Posterior vena cava (tissue), 2 donors: ENCODE measurements at regions of chr9 and their contacts with region 1.

Region 1: GRCh38 chr9:104927912-104928740 is at the start of gene ABCA1:
- DNase-seq: peak; percentile 97
- total RNA-seq, gene ABCA1: 23.5 to 32.9 TPM

Region 2: GRCh38 chr9:104863180-104863883 is 64.8 kb before region 1 on chr9:
- intact Hi-C with region 1: loop called (anchors 5 to 10 kb)
- DNase-seq: peak; percentile 64

Region 3: GRCh38 chr9:104868687-104869404 is 59.3 kb before region 1 on chr9:
- intact Hi-C with region 1: loop called (anchors 5 to 10 kb)
- DNase-seq: peak; percentile 92

Region 4: GRCh38 chr9:104879555-104880309 is 48.4 kb before region 1 on chr9:
- intact Hi-C with region 1: no loop called
- DNase-seq: peak; percentile 50

Region 5: GRCh38 chr9:105064315-105065097 is 136.4 kb after region 1 on chr9:
- intact Hi-C with region 1: loop called in 1 of 2 experiments (anchors 5 kb)
- DNase-seq: peak; percentile 96

Region 6: DNA sequence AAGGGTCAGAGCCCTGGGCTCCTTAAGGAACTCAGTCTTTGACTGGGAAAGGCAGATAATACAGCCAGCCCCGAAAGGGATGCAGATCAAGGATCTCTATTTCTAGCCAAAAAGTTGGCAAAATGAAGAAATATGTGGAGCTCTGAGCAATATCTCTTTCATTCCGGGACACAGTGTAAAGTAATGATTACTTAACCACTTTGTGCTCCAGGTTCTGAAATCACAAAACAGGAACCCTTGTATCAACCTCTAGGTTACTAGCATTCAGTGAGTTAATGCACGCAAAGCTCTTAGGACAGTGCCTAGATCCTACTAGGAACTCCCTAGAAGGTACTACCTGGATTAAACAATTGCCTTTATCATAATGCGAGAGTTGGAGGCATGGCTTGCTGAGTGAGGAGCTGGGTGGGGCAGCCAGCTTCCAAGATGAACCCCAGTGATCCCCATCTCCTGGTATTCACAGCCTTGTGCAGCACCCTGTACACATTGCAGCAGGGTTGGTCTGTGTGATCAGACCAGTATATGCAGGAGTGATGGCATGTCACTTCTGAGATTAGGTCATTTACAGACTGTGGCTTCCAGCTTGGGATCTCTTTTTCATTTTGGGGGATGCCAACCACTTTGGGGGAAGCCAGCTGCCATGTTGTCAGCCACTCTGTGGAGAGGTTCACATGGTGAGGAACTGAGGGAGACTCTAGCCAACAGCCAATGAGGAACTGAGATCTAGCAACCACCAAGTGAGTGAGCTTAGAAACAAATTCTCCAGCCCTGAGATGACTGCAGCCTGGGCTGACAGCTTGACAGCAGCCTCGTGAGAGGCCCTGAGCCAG is 213.2 kb after region 1 on chr9:
- intact Hi-C with region 1: loop called in 1 of 2 experiments (anchors 10 kb)
- DNase-seq: no peak

Region 7: DNA sequence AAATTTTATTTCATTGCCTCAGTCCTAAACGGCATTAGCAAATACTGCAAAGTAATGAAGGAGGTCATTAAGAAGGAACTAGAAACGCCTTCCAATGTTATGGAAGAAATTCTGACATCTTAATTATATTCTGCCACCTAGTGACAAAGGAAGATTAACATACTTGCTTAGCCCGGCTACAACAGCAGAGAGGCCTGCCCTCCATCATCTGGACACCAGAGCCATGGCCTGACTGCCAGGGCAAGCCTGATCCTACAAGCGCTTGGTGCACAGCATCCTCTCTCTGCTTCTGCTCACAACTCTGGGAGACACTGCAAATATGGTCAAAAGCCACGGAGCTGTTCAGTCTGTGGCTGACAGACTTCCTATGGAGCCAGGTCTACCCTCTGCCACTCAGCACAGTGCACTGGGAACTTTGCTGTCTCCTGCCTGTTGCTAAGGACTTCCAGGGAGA is 229.0 kb after region 1 on chr9:
- intact Hi-C with region 1: loop called in 1 of 2 experiments (anchors 5 kb)
- DNase-seq: peak; percentile 84

Region 8: DNA sequence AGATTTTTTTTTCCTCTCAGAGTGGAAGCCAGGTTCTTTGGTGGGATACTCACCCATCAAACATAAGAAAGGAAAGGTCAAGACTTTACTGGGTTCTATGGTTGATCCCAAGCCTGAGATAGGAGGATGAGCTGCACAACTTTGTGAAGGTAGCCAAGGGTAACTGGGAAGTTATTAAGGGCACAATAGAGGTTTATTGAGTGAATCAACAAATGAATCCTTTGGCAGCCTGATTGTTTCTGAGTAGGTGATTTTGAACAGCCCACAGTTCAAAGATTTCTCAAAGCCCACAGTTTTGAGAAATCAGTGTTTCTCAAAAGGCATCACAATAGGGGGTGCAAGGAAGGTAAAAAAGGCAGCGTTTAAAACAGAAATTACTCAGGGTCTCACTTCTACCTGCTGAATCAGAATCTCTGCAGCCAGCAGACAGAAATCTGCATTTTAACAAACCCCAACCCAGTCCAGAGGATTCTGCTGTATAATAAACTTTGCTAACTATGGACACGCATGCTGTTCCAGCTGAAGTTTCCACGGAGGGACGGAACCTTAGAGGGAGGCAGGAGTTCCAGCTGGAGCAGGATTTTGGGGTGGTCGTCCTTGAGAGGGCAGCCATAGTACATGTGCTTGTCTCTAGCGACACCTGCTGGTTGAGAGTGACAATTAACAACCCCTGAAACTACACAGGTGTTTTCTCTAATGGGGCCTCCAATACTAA is 487.0 kb after region 1 on chr9:
- intact Hi-C with region 1: loop called in 1 of 2 experiments (anchors 10 kb)
- DNase-seq: no peak